Psoas muscle (tissue), 8 donors: ENCODE measurements at regions of chr1 and their contacts with region 1.

Region 1: GRCh38 chr1:208534599-208534897 is 290.4 kb upstream of the PLXNA2 start:
- DNase-seq: no peak
- ATAC-seq: peak; percentile 77 to 89 (median 82)
- H3K4me3 ChIP-seq: no peak overlapping the region
- H3K27ac ChIP-seq: no peak overlapping the region
- H3K4me1 ChIP-seq: peaks cover 5% of the 10 kb centered on the region
- H3K27me3 ChIP-seq: no peaks in the 10 kb centered on the region
- CTCF ChIP-seq: no peak

Region 2: DNA sequence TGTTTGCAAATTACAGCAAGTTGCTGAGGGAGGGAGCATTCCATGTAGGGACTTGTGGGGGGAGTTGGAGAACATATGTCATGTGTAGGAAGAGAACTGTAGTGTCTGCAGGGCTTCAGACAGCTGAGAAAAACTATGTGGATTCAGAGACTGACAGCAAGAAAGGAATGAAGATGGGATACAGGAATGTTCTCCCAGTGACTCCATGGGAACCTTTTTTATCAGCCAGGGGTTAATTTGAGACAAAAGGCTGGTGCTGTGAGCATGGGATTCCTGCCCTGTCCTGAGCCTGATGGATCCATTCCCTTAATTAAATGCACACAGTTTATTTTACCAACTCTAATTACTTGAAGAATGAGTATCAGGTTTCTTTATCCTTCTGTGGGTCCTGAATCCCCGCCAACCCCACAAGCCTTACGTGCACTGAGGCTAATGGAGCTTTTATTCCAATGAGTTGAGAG is 263.9 kb before region 1 on chr1:
- intact Hi-C with region 1: loop called in 1 of 2 experiments (anchors 10 kb)
- DNase-seq: no peak
- ATAC-seq: no peak
- H3K4me3 ChIP-seq: no peak overlapping the region
- H3K27ac ChIP-seq: no peak overlapping the region
- H3K4me1 ChIP-seq: peaks cover 4% of the 10 kb centered on the region
- H3K27me3 ChIP-seq: peaks cover 0 to 11% (median 0%) of the 10 kb centered on the region in 3 donors
- CTCF ChIP-seq: no peak